HepG2 (cell line): ENCODE measurements at regions of chr20 and their contacts with region 1.

Region 1: DNA sequence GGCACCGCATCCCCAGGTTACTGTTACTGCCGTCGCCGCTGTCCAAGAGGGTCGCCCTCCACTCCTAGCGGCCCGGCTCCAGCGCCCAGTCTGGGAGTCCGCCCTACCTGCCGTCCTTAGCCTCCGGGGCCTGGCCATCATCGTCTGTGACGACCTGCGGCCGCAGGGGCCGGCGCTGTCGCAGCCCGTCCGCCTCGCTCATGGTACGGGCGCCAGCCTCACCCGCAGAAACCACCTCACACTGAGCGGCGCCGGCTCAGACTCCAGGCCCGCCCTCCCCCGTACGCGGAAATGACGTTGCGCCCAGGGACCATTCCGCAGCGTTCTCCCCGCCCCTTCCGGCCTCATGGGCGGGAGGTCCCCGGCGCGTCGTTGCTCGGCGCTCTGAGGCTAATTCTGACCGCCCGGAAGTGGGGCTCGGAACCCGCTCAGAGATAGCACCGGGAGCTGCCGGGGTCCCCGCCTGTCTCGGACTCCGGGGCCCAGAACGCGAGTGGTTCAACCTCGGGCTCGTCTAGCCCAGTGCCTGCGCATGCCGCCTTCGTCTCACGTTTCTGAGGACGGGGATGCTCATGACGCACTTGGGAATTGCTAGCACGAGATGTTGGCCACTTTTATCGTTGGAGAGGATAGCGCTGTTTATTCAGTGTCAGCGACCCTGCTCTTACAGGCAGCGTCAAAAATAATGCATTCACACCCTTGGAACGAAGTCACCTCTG is at the start of gene APMAP:
- DNase-seq: peak; percentile 94
- ATAC-seq: peak; percentile 94
- H3K4me3 ChIP-seq: peak within 1 kb of the TSS; percentile 75 to 88 (median 85)
- H3K27ac ChIP-seq: peak within 1 kb of the TSS; percentile 67
- H3K4me1 ChIP-seq: peaks cover 68% of the 10 kb centered on the region
- H3K27me3 ChIP-seq: peaks cover 1 to 7% of the 10 kb centered on the region in 2 experiments; a peak in 1 of 5 replicates
- CTCF ChIP-seq: peak; percentile 24
- EP300 ChIP-seq: peak; percentile 23 to 48; a peak in 1 of 4 replicates
- POLR2A ChIP-seq: peak; percentile 93 to 97
- RAD21 ChIP-seq: peak; percentile 27; the same call in 1 of the 2 replicates
- total RNA-seq, gene APMAP: 96.9 and 214 TPM in 2 replicates

Region 2: DNA sequence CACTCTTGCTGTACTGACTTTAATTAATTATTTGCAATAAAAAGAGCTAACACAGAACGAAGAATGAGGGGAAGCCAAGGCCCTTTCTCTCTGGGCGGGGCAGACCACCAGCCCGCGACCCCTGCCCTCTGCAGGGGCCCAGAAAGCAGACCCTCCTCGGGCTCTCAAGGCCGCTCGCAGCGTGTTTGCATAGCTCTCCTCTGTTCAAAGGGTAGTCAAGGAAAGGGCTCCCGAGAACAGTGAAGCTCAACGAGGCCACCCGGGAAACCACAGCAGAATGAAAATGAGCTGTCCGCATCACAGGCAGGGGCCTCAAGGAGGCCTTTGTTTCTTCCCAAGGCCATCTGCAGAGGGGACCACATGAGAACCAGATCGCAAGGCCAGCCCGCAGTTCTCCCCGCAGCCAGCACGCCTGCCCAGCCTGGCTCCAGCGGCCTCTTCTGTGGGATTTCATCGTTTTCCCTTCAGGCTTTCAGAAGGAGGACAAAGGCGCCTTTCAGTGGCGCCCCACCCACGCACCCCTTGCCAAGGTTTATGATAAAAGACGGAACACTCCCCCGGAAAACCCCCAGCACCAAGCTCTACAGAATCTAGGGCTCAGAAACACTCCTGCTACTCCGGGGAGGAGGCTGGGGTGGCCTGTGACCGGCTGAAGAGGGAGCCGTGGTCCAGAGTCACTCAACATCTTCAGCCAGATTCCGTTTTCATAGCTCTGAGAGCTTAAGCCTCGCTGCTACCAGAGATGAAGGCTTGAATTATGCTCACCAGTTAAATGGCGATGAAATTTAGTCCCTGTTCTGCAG is 40.0 kb after region 1 on chr20:
- CTCF ChIA-PET with region 1: interaction called, 3 read pairs
- POLR2A ChIA-PET with region 1: interaction called, 4 read pairs
- in situ Hi-C with region 1: no loop called
- intact Hi-C with region 1: loop called (anchors 1 kb)
- DNase-seq: peak; percentile 88
- ATAC-seq: peak; percentile 91
- H3K4me3 ChIP-seq: peak overlapping the region; percentile 12 to 56 (median 22); a peak in 5 of 6 replicates
- H3K27ac ChIP-seq: peak overlapping the region; percentile 55
- H3K4me1 ChIP-seq: peaks cover 64% of the 10 kb centered on the region
- H3K27me3 ChIP-seq: no peaks in the 10 kb centered on the region
- CTCF ChIP-seq: no peak
- EP300 ChIP-seq: peak; percentile 17 to 69; a peak in 3 of 4 replicates
- POLR2A ChIP-seq: peak in 1 of 2 experiments; percentile 32; a peak in 1 of 4 replicates
- RAD21 ChIP-seq: no peak

Region 3: GRCh38 chr20:25065625-25066338 is 73.1 kb after region 1 on chr20:
- CTCF ChIA-PET with region 1: interaction called, 138 read pairs
- POLR2A ChIA-PET with region 1: interaction called, 4 read pairs
- in situ Hi-C with region 1: loop called (anchors 5 kb)
- intact Hi-C with region 1: loop called (anchors 1 kb)
- DNase-seq: peak; percentile 65
- ATAC-seq: peak; percentile 64
- H3K4me3 ChIP-seq: peak overlapping the region in 2 of 3 experiments; percentile 1 to 24; a peak in 1 of 6 replicates
- H3K27ac ChIP-seq: no peak overlapping the region
- H3K4me1 ChIP-seq: peaks cover 63% of the 10 kb centered on the region
- H3K27me3 ChIP-seq: peaks cover 0 to 6% of the 10 kb centered on the region in 2 experiments; a peak in 3 of 5 replicates
- CTCF ChIP-seq: peak; percentile 91
- EP300 ChIP-seq: no peak
- POLR2A ChIP-seq: no peak
- RAD21 ChIP-seq: peak; percentile 96

Region 4: DNA sequence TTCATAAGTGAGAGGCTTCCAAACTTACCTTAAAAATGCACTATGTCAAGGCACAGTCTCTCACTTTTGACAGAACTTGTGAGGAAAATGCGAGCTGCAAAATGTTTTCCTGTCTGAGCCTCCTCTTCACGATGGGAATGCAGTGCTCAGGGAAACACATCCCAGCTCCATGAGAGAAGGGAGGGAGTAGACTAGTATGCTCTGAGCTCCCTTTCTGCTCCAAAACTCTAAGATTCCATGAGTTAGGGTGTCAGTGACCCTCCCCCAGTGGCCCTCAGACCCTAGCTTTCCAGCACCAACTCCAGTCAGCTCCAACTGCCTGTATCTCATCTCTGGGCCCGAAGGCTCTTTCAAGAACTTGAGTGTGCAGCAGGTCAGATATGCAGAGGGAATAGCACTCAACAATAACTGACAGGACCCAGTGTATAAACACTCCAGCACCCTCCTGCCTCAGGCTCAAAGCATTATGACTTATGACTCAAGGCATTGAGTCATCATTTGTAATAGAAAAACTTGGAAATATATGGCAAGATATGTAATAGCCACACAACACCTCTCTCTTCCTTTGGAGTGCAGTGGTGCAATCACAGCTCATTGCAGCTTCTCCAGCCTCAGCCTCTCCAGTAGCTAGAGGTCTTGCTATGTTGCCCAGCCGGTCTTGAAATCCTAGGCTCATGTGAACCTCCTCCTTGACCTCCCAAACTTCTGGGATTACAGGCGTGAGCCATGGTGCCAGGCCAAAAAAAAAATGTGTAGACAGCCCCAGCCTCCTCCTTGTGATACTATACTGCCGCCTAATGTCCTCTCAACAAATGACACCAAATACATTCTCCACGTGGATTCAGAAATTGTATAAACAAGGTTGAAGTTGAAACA is 186.2 kb after region 1 on chr20:
- CTCF ChIA-PET with region 1: interaction called, 45 read pairs
- POLR2A ChIA-PET with region 1: interaction called, 6 read pairs
- in situ Hi-C with region 1: no loop called
- intact Hi-C with region 1: loop called (anchors 1 kb)
- DNase-seq: peak; percentile 67
- ATAC-seq: peak; percentile 79
- H3K4me3 ChIP-seq: no peak overlapping the region
- H3K27ac ChIP-seq: no peak overlapping the region
- H3K4me1 ChIP-seq: peaks cover 47% of the 10 kb centered on the region
- H3K27me3 ChIP-seq: no peaks in the 10 kb centered on the region
- CTCF ChIP-seq: peak; percentile 98
- EP300 ChIP-seq: no peak
- POLR2A ChIP-seq: no peak
- RAD21 ChIP-seq: peak; percentile 97

Region 5: GRCh38 chr20:25294459-25295385 is 302.1 kb after region 1 on chr20:
- CTCF ChIA-PET with region 1: interaction called, 14 read pairs
- POLR2A ChIA-PET with region 1: no interaction called
- in situ Hi-C with region 1: loop called (anchors 10 kb)
- intact Hi-C with region 1: loop called (anchors 5 kb)
- DNase-seq: peak; percentile 82
- ATAC-seq: peak; percentile 90
- H3K4me3 ChIP-seq: no peak overlapping the region
- H3K27ac ChIP-seq: no peak overlapping the region
- H3K4me1 ChIP-seq: 0 out of 2 replicates have a peak, but pooled peaks cover 5% of the 10 kb centered on the region
- H3K27me3 ChIP-seq: no peaks in the 10 kb centered on the region
- CTCF ChIP-seq: peak; percentile 100
- EP300 ChIP-seq: no peak
- POLR2A ChIP-seq: no peak; a peak in 1 of 4 replicates
- RAD21 ChIP-seq: peak; percentile 98